PC-3 (cell line): ENCODE measurements at regions of chr1 and their contacts with region 1.

Region 1: DNA sequence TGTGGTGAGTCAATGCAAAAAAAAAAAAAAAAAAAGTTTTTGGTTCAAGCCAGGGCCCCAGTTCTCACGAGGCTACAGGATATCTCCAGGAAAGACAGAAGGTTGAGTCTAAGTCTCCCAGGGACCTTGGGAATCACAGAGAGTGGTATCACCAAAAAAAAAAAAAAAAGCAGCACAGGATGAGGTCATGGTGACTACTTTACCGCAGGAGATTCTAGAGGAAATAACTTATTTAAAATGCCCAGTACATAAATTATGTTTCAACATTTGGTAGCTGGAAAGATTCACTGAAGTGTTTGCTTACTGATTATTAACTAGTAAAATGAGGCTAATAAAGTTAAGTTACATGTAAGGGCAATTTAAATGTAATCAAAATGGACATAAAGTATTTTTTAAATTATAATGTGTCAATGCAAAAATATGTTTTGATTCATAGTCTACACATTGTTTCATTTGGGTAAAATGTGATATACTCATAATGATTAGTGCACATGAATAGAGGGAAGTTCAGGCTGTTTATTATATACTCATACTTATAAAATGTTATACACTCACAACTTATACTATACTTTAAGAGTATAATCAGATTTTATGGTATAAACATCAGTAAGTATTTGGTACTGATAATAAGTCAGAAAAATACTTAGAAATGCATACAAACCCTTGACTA is 84.1 kb downstream of the PLPPR5 start:
- DNase-seq: peak; percentile 85
- ATAC-seq: peak; percentile 52
- H3K4me3 ChIP-seq: peak overlapping the region; percentile 59
- H3K27ac ChIP-seq: peak overlapping the region; percentile 99
- H3K4me1 ChIP-seq: peaks cover 89% of the 10 kb centered on the region
- H3K27me3 ChIP-seq: no peaks in the 10 kb centered on the region
- CTCF ChIP-seq: no peak

Region 2: GRCh38 chr1:98794196-98794886 is 126.2 kb before region 1 on chr1:
- CTCF ChIA-PET with region 1: no interaction called
- POLR2A ChIA-PET with region 1: no interaction called
- intact Hi-C with region 1: loop called (anchors 2 kb)
- DNase-seq: peak; percentile 88
- ATAC-seq: peak; percentile 68
- H3K4me3 ChIP-seq: no peak overlapping the region
- H3K27ac ChIP-seq: no peak overlapping the region
- H3K4me1 ChIP-seq: peaks cover 32% of the 10 kb centered on the region
- H3K27me3 ChIP-seq: no peaks in the 10 kb centered on the region
- CTCF ChIP-seq: peak; percentile 91

Region 3: DNA sequence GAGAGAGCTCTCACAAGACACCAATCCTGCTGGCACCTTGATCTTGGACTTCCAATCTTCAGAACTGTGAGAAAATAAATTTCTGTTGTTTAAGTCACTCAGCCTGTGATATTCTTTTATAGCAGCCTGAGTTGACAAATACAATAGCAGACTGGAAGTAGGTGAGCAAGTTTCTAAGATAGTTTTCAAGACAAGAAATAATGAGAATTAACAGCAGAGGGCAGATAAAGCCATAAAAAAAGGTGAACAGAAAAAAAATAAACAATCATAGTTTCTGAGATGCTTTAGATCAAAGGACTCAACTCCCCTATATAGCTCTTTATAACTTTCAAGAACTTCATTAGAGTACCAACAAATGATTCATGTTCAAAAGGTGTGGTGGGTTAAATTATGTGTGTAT is 35.7 kb before region 1 on chr1:
- CTCF ChIA-PET with region 1: no interaction called
- POLR2A ChIA-PET with region 1: no interaction called
- intact Hi-C with region 1: loop called (anchors 5 kb)
- DNase-seq: peak; percentile 54
- ATAC-seq: peak; percentile 42
- H3K4me3 ChIP-seq: no peak overlapping the region
- H3K27ac ChIP-seq: no peak overlapping the region
- H3K4me1 ChIP-seq: peaks cover 4% of the 10 kb centered on the region; the same call in 1 of the 2 replicates
- H3K27me3 ChIP-seq: no peaks in the 10 kb centered on the region
- CTCF ChIP-seq: peak; percentile 60

Region 4: GRCh38 chr1:98903261-98903660 is 17.3 kb before region 1 on chr1:
- CTCF ChIA-PET with region 1: no interaction called
- POLR2A ChIA-PET with region 1: no interaction called
- intact Hi-C with region 1: loop called (anchors 1 kb)
- DNase-seq: peak; percentile 95
- ATAC-seq: peak; percentile 88
- H3K4me3 ChIP-seq: peak overlapping the region; percentile 41; the same call in 1 of the 2 replicates
- H3K27ac ChIP-seq: peak overlapping the region; percentile 85
- H3K4me1 ChIP-seq: peaks cover 57% of the 10 kb centered on the region
- H3K27me3 ChIP-seq: no peaks in the 10 kb centered on the region
- CTCF ChIP-seq: no peak

Region 5: GRCh38 chr1:98981917-98982513 is 61.4 kb after region 1 on chr1:
- CTCF ChIA-PET with region 1: no interaction called
- POLR2A ChIA-PET with region 1: no interaction called
- intact Hi-C with region 1: loop called (anchors 1 kb)
- DNase-seq: peak; percentile 89
- ATAC-seq: peak; percentile 87
- H3K4me3 ChIP-seq: no peak overlapping the region
- H3K27ac ChIP-seq: peak overlapping the region; percentile 76
- H3K4me1 ChIP-seq: peaks cover 22% of the 10 kb centered on the region
- H3K27me3 ChIP-seq: no peaks in the 10 kb centered on the region
- CTCF ChIP-seq: no peak

Region 6: DNA sequence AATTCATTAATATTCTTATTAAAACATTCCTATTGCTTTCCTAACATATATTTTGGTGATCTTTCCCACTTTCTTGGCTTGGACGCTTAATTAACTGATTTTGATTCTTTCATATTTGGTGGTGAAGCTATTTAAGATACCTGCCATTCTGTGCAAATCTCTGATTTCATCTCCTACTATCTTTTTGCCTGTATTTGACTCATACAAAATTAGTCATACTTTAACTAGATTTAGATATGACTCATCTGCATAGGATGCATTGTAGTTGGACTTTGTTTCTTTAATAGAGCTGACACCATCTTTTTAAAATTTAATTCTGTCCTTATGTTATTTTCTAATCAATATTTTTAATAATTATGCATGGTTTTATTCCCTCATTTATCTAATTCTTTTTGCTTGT is 249.9 kb after region 1 on chr1:
- CTCF ChIA-PET with region 1: no interaction called
- POLR2A ChIA-PET with region 1: no interaction called
- intact Hi-C with region 1: loop called (anchors 2 kb)
- DNase-seq: peak; percentile 84
- ATAC-seq: peak; percentile 90
- H3K4me3 ChIP-seq: no peak overlapping the region
- H3K27ac ChIP-seq: peak overlapping the region; percentile 35; the same call in 1 of the 2 replicates
- H3K4me1 ChIP-seq: peaks cover 32% of the 10 kb centered on the region
- H3K27me3 ChIP-seq: no peaks in the 10 kb centered on the region
- CTCF ChIP-seq: no peak

Region 7: DNA sequence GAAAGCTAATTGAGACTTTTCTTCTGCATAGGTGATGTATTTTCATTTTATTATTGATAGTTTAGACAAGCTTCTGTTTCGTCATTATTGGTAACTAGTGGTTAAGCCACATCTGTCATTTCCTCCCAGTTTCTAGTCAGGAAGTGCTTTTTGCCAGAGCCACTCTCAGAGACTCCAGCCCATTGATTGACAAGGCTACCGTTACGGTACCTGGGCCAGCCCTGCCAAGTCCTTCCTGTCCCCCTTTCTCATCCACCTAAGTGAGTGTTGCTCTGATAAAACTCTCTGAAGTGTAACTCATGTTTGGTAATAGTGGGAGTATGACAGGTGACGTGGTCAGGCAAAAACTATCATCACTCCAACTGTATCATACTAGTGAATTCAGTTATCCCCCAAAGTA is 900.0 kb after region 1 on chr1:
- CTCF ChIA-PET with region 1: no interaction called
- POLR2A ChIA-PET with region 1: interaction called, 22 read pairs
- intact Hi-C with region 1: no loop called
- DNase-seq: no peak
- ATAC-seq: no peak
- H3K4me3 ChIP-seq: no peak overlapping the region
- H3K27ac ChIP-seq: no peak overlapping the region
- H3K4me1 ChIP-seq: no peaks in the 10 kb centered on the region
- H3K27me3 ChIP-seq: no peaks in the 10 kb centered on the region
- CTCF ChIP-seq: no peak